Heart right ventricle (tissue), 16 donors: ENCODE measurements at regions of chr14 and their contacts with region 1.

Region 1: DNA sequence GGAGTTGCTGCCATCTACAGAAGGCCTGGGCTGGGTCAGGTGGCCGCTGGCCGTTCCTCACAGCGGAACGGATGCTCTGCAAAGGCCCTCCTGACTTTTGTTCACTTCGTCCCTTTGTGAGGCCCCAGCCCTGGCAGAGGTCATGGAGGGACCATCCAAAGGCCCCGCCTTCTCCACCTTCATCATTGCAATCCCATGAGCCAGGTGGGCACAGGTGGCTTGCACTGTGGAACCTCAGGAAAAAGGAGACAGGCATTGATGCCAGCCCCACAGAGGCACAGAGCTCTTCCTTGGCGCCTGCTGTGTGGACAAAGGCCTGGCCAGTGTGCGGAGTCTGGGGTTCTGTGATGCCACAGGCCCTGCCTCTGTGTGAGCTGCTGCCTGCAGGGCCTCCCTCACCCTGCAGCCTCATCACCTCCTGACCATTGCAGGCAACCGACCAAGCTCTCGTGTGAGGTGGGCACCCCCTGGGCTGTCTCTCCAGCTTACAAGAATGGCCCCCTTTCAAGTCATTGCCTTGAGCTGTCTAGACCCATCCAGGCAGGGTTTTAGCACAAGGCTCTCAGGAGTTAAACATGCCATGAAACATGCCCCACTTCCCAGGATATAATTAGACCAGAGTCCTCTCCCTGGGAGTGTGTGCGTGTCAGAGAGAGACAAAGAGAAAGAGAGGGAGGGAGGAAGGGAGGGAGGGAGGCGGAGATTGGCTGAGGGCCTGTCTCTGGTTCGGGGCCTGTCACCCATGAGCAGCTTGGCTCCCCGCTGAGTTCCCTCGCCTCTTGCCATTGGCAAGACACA is 19.3 kb downstream of the NFKBIA start:
- DNase-seq: peak; percentile 84 to 88
- ATAC-seq: peak; percentile 91 to 96 (median 94)
- H3K4me3 ChIP-seq: no peak overlapping the region
- H3K27ac ChIP-seq: peak overlapping the region; percentile 73 to 90 (median 86)
- H3K4me1 ChIP-seq: peaks cover 18 to 39% (median 30%) of the 10 kb centered on the region in 9 donors
- H3K27me3 ChIP-seq: no peaks in the 10 kb centered on the region
- CTCF ChIP-seq: no peak

Region 2: DNA sequence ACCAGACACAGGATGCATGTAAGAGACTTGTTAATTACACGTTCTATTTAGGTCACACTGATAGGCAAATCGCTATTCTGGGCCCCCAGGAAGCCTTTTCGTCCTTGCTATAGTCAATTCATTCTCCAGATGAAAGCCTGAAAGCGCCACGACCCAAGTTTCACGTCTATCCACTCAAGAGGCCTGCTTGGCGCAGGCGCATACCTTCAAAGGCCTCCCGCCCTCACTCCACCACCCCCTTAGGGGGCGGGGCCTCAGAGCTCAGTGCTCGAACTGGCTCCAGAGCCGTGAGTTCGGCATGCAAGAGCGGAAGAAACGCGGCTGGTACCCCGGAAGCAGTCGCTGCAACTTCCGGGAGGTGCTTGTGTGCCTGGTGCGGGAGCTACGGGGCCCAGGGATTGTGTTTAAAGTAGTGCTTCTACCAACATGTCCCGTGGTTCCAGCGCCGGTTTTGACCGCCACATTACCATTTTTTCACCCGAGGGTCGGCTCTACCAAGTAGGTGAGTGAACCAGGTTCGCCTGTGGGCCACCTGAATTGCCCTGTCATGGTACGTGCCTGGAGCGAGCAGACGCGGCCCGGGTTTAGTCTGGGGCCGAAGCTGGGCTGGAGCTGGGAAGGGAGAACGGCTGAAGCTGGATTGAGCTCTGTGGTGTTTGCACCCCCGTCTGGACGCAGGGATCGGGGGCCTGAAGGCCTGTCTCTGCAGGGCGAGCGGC is 93.0 kb before region 1 on chr14 and contains the start of gene PSMA6:
- intact Hi-C with region 1: loop called in 1 of 10 experiments (anchors 2 kb)
- DNase-seq: peak; percentile 98
- ATAC-seq: peak; percentile 99 to 100 (median 100)
- H3K4me3 ChIP-seq: peak within 1 kb of the TSS; percentile 59 to 95 (median 86)
- H3K27ac ChIP-seq: peak within 1 kb of the TSS; percentile 77 to 95 (median 92)
- H3K4me1 ChIP-seq: peaks cover 4 to 65% (median 43%) of the 10 kb centered on the region in 9 donors
- H3K27me3 ChIP-seq: no peaks in the 10 kb centered on the region
- CTCF ChIP-seq: no peak
- total RNA-seq, gene PSMA6: 150 to 228 (median 166) TPM

Region 3: DNA sequence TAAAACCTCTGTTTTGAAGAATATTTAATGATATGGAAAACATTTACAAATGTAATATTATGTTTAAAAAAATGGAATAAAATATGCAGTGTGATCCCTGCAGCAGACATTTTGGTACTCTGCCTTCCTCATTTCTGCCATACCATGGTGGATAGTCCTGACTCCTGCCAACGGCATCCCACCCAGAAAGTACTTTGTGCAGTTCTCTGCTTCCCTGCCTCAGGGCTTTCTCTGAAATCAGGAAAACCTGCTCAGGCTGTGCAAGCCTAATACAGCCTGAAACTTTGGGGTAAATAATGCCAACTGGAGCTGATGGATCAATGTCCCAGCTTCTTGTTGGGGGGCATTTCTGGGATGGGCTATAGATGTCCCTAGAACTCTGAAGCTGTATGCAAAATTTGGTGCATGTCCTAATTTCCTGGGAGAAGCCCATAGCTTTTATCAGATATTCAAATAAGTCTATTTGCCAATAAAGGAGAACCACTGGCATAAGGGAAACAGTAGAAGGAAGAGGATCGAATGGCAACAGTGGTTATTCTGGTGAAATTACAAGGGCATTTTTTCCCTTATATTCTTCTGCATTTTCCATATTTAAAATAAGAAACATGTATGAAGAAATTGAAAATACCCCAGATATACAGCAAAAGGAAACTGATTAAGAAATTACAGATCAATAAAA is 59.0 kb before region 1 on chr14:
- intact Hi-C with region 1: no loop called
- DNase-seq: no peak
- ATAC-seq: no peak
- H3K4me3 ChIP-seq: no peak overlapping the region
- H3K27ac ChIP-seq: no peak overlapping the region
- H3K4me1 ChIP-seq: no peaks in the 10 kb centered on the region
- H3K27me3 ChIP-seq: no peaks in the 10 kb centered on the region
- CTCF ChIP-seq: no peak

Region 4: DNA sequence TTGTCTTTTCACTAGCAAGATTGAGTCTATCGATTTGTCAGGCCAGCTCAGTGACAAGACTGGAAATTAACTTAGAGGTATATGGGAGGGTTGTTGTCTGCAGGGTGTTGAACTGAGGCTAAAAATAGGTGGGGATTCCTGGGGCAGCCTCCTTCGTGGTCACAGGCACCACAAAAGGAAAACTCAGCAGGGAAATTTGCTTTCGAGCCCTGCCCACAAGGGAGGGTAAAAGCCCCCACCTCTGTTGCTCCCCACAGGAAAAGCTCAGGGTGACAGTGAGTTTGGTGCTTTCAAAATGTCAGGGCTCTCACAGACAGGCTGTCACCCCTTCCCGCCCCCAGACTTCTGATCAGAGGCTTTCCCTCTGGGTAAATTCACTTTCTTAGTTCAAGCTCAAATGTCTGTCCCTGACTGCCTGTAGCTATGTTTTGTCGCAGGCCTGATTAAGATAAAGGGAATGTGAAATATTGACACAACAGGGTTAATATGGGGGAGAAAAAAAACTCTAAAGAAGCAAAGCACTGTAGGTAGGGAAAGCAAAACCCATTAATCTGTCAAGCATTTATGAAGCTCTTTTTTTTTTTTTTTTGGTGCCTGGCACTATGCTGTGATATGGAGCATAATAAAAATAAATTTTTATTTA is 31.0 kb after region 1 on chr14:
- intact Hi-C with region 1: no loop called
- DNase-seq: no peak
- ATAC-seq: no peak
- H3K4me3 ChIP-seq: no peak overlapping the region
- H3K27ac ChIP-seq: peak overlapping the region in 4 of 10 donors; percentile 23 to 75 (median 32)
- H3K4me1 ChIP-seq: peaks cover 4 to 49% (median 36%) of the 10 kb centered on the region in 9 donors
- H3K27me3 ChIP-seq: no peaks in the 10 kb centered on the region
- CTCF ChIP-seq: no peak